ENCODE measurements at regions of chr10 and their contacts with region 1.

Region 1: GRCh38 chr10:78047314-78047891 is 13.7 kb downstream of the RPS24 start:
- DNase-seq: peak; percentile 94
- ATAC-seq: peak; percentile 90
- H3K4me3 Mint-ChIP-seq: no peak overlapping the region
- H3K27ac Mint-ChIP-seq: no peak overlapping the region
- H3K4me1 Mint-ChIP-seq: peaks cover 27% of the 10 kb centered on the region
- H3K27me3 Mint-ChIP-seq: no peaks in the 10 kb centered on the region
- CTCF ChIP-seq: peak; percentile 82

Region 2: DNA sequence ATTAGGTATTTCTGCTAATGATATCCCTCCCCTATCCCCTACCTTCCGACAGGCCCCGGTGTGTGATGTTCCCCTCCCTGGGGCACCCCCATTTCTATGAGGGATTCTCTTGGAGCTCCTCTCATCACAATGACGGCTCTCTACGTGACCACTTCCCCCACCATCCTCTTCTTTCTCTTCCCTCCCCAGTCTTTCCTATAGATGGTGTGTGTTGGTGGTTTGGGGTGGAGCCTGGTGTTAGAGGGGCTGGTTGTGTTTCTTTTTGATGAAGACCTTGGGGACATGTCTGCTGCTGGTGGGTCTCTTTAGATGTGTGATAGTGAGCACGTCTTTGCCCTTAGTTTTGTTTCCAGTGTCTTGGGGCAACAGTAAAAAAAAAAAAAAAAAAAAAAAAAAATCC is 14.9 kb after region 1 on chr10:
- CTCF ChIA-PET with region 1: interaction called, 34 read pairs
- POLR2A ChIA-PET with region 1: interaction called, 3 read pairs
- intact Hi-C with region 1: no loop called
- DNase-seq: peak; percentile 71
- ATAC-seq: peak; percentile 94
- H3K4me3 Mint-ChIP-seq: peak overlapping the region; percentile 39
- H3K27ac Mint-ChIP-seq: peak overlapping the region; percentile 53
- H3K4me1 Mint-ChIP-seq: peaks cover 27% of the 10 kb centered on the region
- H3K27me3 Mint-ChIP-seq: no peaks in the 10 kb centered on the region
- CTCF ChIP-seq: no peak

Region 3: GRCh38 chr10:78427497-78428031 is 380.2 kb after region 1 on chr10:
- CTCF ChIA-PET with region 1: no interaction called
- POLR2A ChIA-PET with region 1: no interaction called
- intact Hi-C with region 1: no loop called
- DNase-seq: no peak
- ATAC-seq: no peak
- H3K4me3 Mint-ChIP-seq: no peak overlapping the region
- H3K27ac Mint-ChIP-seq: no peak overlapping the region
- H3K4me1 Mint-ChIP-seq: no peaks in the 10 kb centered on the region
- H3K27me3 Mint-ChIP-seq: peaks cover 15% of the 10 kb centered on the region
- CTCF ChIP-seq: no peak

Region 4: GRCh38 chr10:78657163-78657861 is 609.9 kb after region 1 on chr10:
- CTCF ChIA-PET with region 1: interaction called, 20 read pairs
- POLR2A ChIA-PET with region 1: no interaction called
- intact Hi-C with region 1: loop called (anchors 5 kb)
- DNase-seq: peak; percentile 85
- ATAC-seq: peak; percentile 89
- H3K4me3 Mint-ChIP-seq: no peak overlapping the region
- H3K27ac Mint-ChIP-seq: no peak overlapping the region
- H3K4me1 Mint-ChIP-seq: no peaks in the 10 kb centered on the region
- H3K27me3 Mint-ChIP-seq: peaks cover 4% of the 10 kb centered on the region
- CTCF ChIP-seq: peak; percentile 69

Measured in activated CD8-positive, alpha-beta T cell treated with anti-CD3 and anti-CD28 coated beads for 36 hours (primary cell).